Caco-2 (cell line): ENCODE measurements at regions of chr11 and their contacts with region 1.

Region 1: DNA sequence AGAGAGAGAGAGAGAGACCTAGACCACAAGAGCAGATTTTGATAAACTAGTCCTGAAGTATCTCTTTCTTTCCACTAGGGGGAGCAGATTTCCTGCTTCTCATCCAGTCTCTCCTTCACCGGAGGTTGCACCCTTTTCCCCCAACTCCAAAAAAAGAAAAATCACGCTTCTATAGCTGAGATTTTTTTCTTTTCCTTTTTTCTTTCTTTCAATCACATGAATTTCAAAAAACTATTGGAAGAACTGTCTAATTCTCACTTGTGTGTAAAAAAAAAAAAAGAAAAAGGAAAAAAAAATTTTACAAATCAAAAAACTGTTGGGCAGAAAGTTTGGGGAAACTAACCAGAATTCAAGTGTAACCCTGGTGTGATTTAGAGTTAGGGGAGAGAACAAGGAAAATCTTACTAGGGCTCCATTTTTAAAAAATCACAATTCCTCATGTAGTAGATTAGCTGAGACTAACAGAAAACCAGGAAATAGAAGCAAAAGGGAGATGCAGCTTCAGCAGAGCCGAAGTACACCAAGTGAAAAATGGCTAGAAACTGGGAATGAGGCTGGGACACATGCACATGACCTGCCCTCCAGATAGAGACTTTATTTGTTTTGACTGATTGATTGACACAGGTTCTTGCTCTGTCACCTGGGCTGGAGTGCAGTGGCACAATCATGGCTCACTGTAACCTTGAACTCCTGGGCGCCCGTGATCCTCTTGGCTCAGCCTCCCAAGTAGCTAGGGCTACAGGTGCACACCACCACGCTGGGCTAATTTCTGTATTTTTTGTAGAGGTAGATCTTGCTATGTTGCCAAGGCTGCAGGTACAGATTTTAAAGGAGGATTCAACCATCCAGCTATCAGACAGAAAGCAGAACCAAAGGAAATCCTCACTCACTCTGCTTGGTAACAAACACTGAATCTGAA is 27.1 kb downstream of the SDHD start:
- DNase-seq: peak in 1 of 2 experiments; percentile 66
- H3K4me3 ChIP-seq: no peak overlapping the region
- H3K4me3 Mint-ChIP-seq: no peak overlapping the region
- H3K27ac Mint-ChIP-seq: no peak overlapping the region
- H3K4me1 ChIP-seq: no peaks in the 10 kb centered on the region
- H3K4me1 Mint-ChIP-seq: no peaks in the 10 kb centered on the region
- H3K27me3 ChIP-seq: no peaks in the 10 kb centered on the region
- H3K27me3 Mint-ChIP-seq: no peaks in the 10 kb centered on the region
- CTCF ChIP-seq: peak; percentile 88 to 92

Region 2: GRCh38 chr11:111938687-111939160 is 175.1 kb before region 1 on chr11:
- CTCF ChIA-PET with region 1: no interaction called
- POLR2A ChIA-PET with region 1: no interaction called
- intact Hi-C with region 1: no loop called
- DNase-seq: no peak
- H3K4me3 ChIP-seq: no peak overlapping the region
- H3K4me3 Mint-ChIP-seq: peak overlapping the region; percentile 77
- H3K27ac Mint-ChIP-seq: no peak overlapping the region
- H3K4me1 ChIP-seq: peaks cover 18% of the 10 kb centered on the region
- H3K4me1 Mint-ChIP-seq: peaks cover 15% of the 10 kb centered on the region
- H3K27me3 ChIP-seq: no peaks in the 10 kb centered on the region
- H3K27me3 Mint-ChIP-seq: no peaks in the 10 kb centered on the region
- CTCF ChIP-seq: no peak

Region 3: GRCh38 chr11:112163875-112164685 is 50.3 kb after region 1 on chr11 and contains the start of gene IL18:
- CTCF ChIA-PET with region 1: interaction called, 6 read pairs
- POLR2A ChIA-PET with region 1: no interaction called
- intact Hi-C with region 1: loop called (anchors 5 kb)
- DNase-seq: peak; percentile 87 to 88
- H3K4me3 ChIP-seq: peak within 1 kb of the TSS; percentile 26
- H3K4me3 Mint-ChIP-seq: peak within 1 kb of the TSS; percentile 81
- H3K27ac Mint-ChIP-seq: peak within 1 kb of the TSS; percentile 86
- H3K4me1 ChIP-seq: peaks cover 32% of the 10 kb centered on the region
- H3K4me1 Mint-ChIP-seq: peaks cover 27% of the 10 kb centered on the region
- H3K27me3 ChIP-seq: no peaks in the 10 kb centered on the region
- H3K27me3 Mint-ChIP-seq: no peaks in the 10 kb centered on the region
- CTCF ChIP-seq: peak in 1 of 2 experiments; percentile 34
- total RNA-seq, gene IL18: 32.8 and 36.5 TPM in 2 replicates

Region 4: GRCh38 chr11:112174789-112175598 is 61.2 kb after region 1 on chr11 and contains the start of gene BCO2:
- CTCF ChIA-PET with region 1: interaction called, 17 read pairs
- POLR2A ChIA-PET with region 1: no interaction called
- intact Hi-C with region 1: loop called (anchors 1 kb)
- DNase-seq: peak; percentile 88 to 89
- H3K4me3 ChIP-seq: no peak within 1 kb of the TSS
- H3K4me3 Mint-ChIP-seq: peak within 1 kb of the TSS; percentile 60
- H3K27ac Mint-ChIP-seq: peak within 1 kb of the TSS; percentile 65
- H3K4me1 ChIP-seq: peaks cover 14% of the 10 kb centered on the region
- H3K4me1 Mint-ChIP-seq: peaks cover 21% of the 10 kb centered on the region
- H3K27me3 ChIP-seq: no peaks in the 10 kb centered on the region
- H3K27me3 Mint-ChIP-seq: peaks cover 12% of the 10 kb centered on the region
- CTCF ChIP-seq: peak; percentile 84 to 96
- total RNA-seq, gene BCO2: 1.3 and 2.2 TPM in 2 replicates